RWPE1 (cell line): ENCODE measurements at regions of chr10 and their contacts with region 1.

Region 1: DNA sequence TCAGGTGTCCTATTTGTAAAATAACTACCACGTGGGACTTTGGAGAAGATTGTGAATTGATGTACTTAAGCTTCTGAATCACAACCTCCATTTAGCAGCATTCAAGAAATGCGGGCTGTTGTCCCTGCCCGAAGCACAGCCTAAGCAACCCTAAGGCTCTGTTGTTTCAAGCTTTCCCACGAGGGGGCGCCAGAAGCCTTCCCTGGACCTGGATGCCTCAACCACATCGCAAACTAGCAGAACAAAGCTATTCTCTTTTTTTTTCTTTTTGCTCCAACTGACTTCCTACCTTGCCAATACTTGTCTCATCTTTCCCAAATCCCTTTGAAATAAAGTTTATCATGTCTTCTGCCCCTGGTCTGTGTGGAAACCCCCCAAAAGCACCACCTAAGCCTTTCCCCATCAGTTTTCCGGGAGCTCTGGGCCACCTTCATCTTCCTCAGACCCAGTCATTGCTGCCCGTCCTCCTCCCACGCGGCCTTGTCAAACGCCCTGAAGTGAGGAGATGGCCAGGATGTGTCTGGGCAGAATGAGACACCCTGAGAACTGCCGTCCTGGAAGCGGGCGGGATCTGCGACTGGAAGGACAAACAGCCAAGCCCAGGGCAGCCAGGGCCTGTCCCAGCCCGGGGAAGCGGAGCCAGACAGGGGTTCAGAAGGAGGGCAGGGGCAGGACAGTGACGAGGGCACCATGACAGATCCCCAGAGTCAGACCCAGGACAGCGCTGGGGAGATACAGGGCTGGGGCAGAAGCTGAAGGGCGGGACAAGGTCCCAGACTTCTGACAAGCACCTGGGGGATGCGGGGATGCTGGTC is 112.7 kb downstream of the SLIT1 start:
- DNase-seq: peak; percentile 79
- H3K27ac ChIP-seq: no peak overlapping the region
- CTCF ChIP-seq: peak; percentile 86

Region 2: GRCh38 chr10:96951954-96952353 is 121.1 kb before region 1 on chr10:
- CTCF ChIA-PET with region 1: no interaction called
- POLR2A ChIA-PET with region 1: no interaction called
- DNase-seq: no peak
- H3K27ac ChIP-seq: no peak overlapping the region
- CTCF ChIP-seq: no peak

Region 3: DNA sequence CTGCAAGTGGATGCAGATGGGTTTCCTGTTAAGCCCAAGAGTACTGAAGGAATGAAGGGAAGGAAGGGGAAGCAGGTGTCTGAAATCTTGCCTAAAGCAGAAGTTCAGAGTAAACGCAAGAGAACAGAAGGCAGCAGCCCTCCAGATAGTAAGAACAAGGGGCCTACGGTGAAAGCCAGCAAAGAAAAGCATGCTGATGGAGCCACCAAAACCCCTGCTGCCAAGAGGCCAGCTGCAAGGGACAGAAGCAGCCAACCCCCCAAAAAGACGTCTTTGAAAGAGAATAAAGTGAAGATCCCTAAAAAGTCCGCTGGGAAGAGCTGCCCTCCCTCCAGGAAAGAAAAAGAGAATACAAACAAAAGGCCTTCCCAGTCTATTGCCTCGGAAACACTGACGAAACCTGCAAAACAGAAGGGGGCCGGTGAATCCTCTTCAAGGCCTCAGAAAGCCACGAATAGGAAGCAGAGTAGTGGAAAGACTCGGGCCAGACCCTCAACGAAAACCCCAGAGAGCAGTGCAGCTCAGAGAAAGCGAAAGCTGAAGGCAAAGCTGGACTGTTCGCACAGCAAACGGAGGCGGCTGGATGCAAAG is 88.4 kb before region 1 on chr10:
- CTCF ChIA-PET with region 1: no interaction called
- POLR2A ChIA-PET with region 1: no interaction called
- DNase-seq: no peak
- H3K27ac ChIP-seq: no peak overlapping the region
- CTCF ChIP-seq: no peak

Region 4: DNA sequence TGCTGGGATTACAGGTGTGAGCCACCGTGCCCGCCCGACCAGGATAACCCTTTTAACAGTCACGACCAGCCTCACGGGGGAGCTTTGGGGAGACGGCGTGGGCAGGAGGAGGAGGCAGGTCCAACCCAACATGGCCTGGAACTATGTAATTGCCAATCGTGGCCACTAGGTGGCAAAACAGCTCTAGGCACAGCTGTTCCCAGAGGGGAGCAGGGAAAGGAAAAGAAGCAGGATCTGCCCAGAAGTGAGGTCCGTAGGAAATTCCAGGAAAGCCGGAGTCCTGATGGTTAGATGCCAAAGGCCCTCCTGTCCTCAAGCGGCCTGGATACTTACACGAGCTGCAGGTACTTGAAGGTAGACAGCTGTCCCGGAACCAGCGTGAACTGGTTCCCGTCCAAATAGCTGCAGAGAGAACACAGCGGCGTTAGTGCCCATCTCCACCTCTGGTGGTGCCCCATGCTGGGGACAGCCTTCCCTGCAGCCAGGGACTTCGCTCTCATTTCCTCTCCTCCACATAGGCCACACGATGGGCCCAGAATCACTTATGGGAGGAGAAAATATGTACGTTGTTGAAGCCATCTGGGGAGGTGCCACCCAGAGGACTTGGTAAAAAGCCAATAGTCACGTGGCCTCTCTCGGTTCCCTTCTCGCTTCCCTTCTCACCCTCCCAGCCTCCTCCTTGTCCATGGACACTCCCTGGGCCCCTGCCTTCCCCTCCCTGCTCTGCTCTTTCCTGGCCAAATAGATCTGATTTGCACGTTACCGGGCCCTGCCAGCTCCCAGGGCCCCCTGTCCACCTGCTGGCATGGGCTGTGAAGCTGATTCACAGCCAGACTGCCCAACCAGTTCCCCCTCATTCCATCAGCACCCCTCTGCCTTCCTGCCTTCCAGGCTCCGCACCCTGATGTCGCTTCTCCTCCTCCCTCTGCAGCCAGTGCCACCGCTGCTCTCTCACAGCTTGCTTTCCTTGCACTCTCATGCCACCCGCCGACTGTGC is 35.4 kb before region 1 on chr10:
- CTCF ChIA-PET with region 1: interaction called, 28 read pairs
- POLR2A ChIA-PET with region 1: no interaction called
- DNase-seq: peak; percentile 91
- H3K27ac ChIP-seq: peak overlapping the region; percentile 39; the same call in 1 of the 2 replicates
- CTCF ChIP-seq: peak; percentile 90

Region 5: DNA sequence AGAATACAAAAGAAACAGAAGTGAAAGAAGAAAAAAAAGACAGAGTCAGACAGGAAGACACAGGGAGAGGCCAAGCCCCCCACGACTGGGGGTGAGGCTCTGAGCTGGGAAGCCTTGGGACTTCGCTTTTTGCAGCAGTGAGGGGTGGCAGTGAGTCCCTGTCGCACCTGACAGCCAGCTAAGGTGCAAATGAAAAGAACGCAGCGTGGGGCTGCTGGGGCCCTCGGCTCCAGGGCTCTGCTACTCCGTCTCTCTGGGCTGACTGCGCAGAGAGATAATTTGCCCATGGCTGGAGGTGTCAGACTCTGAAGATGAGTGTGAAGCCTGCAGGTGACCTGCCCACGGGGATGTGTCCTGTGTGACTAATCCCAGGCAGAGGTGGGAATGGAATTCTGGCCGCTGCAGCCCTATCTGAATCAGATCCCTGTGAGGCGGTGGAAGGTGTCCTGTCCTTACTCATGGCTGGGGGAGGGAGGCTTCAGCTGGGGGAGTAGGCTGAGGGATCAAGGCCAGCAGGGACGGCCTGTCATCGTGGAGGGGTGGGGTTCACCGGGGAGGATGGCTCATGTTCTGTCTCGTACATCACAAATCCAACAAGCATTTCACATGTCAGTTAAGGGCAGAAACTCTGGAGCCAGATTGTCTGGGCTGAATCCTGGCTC is 16.3 kb after region 1 on chr10:
- CTCF ChIA-PET with region 1: interaction called, 22 read pairs
- POLR2A ChIA-PET with region 1: no interaction called
- DNase-seq: peak; percentile 94
- H3K27ac ChIP-seq: no peak overlapping the region
- CTCF ChIP-seq: no peak

Region 6: DNA sequence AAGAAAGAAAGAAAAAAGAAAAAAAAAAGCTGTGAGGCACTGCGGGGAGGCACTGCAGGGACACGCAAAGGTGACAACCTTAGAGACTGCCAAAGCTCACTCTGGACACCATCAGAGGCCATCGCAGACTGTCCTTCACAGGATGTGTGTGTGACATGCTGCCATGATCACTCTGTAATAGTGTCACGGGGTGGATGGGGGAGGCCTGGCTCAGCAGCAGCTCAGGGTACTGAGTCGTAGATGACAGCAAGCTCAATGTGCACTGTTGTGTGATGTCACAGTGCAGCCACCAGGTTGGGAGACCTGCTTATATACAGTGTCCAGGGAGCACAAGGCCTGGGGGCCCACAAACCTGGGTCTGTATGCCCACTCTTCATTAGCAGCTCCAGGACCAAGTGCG is 29.4 kb after region 1 on chr10:
- CTCF ChIA-PET with region 1: interaction called, 16 read pairs
- POLR2A ChIA-PET with region 1: no interaction called
- DNase-seq: no peak
- H3K27ac ChIP-seq: no peak overlapping the region
- CTCF ChIP-seq: no peak

Region 7: DNA sequence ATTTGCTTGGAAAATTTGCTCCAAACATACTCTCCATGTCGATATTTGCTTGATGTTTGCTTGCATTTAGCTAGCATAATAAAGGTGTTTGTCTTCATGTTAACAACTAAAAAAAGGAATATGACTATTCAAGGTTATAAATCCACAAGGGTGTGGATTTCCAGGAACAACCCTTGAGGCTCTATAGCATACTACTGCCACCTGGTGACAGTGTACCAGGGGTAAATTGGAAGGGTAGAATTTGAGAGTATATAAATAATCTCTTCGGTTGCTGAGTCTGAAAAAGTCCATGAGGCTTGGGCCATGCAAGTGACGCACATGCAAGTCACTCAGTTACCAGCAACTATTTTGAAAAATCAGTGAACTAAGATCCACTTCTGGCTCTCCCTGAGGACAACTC is 44.3 kb after region 1 on chr10:
- CTCF ChIA-PET with region 1: interaction called, 126 read pairs
- POLR2A ChIA-PET with region 1: no interaction called
- DNase-seq: peak; percentile 53
- H3K27ac ChIP-seq: no peak overlapping the region
- CTCF ChIP-seq: no peak

Region 8: DNA sequence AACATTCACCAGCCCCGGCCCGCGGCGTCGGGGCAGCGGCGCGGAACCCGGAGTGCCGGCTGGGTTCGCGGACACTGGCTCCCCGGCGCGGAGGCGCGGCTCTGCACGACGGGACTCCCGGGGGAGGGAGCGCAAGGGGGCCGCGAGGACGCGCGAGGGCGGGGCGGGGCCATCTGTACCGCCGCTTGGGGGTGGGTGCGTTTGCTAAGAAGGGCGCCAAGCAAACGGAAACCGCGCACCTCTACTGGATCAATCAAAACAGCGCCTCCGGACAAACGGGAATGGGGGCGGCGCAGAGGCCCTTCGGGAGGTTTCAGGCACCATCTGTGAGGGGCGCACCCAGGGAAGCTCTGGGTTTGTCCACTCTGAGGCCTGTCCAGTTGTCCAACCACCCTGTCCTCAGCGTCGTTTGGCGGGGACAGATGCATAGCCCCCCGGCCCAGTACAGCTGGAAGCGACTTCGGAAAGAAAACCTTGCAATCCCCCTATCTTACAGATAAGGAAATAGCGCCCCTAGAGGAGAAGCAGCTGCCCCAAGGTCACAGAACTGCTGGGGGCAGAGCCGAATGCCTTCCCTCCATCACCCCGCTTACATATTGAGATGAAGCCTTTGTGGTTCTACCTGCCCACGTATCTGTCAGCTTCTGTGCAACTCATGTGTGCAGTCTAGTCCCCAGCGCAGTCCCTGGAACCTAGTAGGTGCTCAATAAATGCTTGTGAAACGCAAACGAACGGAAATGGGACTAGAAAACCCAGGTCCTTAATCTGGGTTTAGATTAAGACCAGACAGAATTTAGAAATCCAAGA is 123.4 kb after region 1 on chr10:
- CTCF ChIA-PET with region 1: interaction called, 14 read pairs
- POLR2A ChIA-PET with region 1: no interaction called
- DNase-seq: peak; percentile 68
- H3K27ac ChIP-seq: no peak overlapping the region
- CTCF ChIP-seq: peak; percentile 77

Region 9: GRCh38 chr10:97210543-97210961 is 137.5 kb after region 1 on chr10:
- CTCF ChIA-PET with region 1: interaction called, 77 read pairs
- POLR2A ChIA-PET with region 1: no interaction called
- DNase-seq: peak; percentile 70
- H3K27ac ChIP-seq: no peak overlapping the region
- CTCF ChIP-seq: peak; percentile 96